CD4-positive, alpha-beta T cell (primary cell): ENCODE measurements at regions of chr20 and their contacts with region 1.

Region 1: DNA sequence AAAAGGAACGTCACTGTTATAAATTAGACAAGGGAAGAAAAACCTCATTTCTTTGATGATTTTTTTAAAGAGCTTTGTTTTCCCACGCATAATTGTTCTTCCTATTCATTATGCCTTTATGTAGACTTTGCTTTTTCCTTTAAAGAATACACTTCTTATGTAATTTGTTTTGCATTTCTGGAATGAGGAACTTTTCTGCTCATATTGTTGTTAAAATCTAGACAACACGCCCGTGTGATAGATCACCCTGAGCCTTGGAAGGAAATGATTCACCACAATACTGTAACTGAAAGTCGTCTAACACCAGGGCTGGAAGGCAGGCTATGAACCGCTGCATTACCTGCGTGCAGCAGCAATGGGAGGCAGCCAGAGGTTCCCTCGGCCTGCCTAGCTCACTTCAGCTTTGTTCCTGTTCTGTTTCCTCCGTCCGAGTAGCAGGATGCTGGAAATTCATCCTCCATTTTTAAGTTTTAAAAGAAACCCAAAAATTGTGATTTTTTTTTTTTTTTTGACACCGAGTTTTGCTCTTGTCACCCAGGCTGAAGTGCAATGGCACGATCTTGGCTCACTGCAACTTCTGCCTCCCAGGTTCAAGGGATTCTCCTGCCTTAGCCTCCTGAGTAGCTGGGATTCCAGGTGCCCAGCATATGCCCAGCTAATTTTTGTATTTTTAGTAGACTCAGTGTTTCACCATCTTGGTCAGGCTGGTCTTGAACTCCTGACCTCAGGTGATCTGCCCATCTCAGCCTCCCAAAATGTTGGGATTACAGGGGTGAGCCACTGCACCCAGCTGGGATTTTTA is 49.6 kb upstream of the ZNF217 start:
- DNase-seq: peak; percentile 54 to 88 (median 68)
- ATAC-seq: peak; percentile 96
- H3K4me3 ChIP-seq: peak overlapping the region; percentile 18
- H3K4me3 Mint-ChIP-seq: peak overlapping the region; percentile 84
- H3K27ac ChIP-seq: peak overlapping the region; percentile 83 to 85
- H3K27ac Mint-ChIP-seq: peak overlapping the region; percentile 93
- H3K4me1 ChIP-seq: peaks cover 38% of the 10 kb centered on the region
- H3K4me1 Mint-ChIP-seq: peaks cover 53% of the 10 kb centered on the region
- H3K27me3 ChIP-seq: no peaks in the 10 kb centered on the region
- H3K27me3 Mint-ChIP-seq: no peaks in the 10 kb centered on the region
- CTCF ChIP-seq: no peak

Region 2: DNA sequence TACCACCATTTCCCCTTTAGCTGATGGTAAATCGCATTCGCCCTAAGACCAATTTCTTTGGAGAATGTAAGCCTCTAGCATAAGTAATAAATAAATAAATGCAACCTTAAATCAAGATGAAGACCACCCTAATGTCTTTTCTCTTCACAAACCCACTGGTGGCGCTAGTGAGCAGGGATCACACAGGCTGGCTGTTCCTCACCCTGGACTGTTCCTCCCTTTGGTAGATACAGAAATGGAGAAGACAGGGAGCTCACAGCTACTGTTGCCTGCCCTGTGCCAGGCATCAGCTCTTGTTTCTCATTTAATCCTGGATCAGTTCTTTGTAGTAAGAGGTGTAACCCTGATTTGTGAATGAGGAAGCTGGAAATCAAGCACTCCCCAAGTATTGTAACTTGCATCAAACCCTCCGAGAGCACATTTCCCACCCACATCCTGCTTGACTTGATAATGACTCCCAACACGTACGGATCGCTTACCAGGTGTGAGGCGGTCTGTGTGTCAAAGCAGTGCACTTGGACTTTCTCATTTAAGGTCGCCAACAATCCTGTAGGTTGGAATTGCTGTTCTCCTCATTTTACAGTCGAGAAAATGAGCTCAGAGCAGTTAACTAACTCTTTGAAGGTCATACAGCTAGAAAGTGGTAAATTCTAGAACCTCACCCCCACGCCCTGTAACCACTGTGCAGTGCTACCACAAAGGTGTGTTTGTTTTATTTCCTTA is 435.0 kb before region 1 on chr20:
- CTCF ChIA-PET with region 1: no interaction called
- POLR2A ChIA-PET with region 1: no interaction called
- intact Hi-C with region 1: no loop called
- DNase-seq: peak in 6 of 14 experiments; percentile 8 to 58 (median 24)
- ATAC-seq: peak; percentile 89
- H3K4me3 ChIP-seq: peak overlapping the region; percentile 23
- H3K4me3 Mint-ChIP-seq: peak overlapping the region; percentile 74
- H3K27ac ChIP-seq: no peak overlapping the region
- H3K27ac Mint-ChIP-seq: peak overlapping the region; percentile 80
- H3K4me1 ChIP-seq: peaks cover 17% of the 10 kb centered on the region
- H3K4me1 Mint-ChIP-seq: peaks cover 20% of the 10 kb centered on the region
- H3K27me3 ChIP-seq: no peaks in the 10 kb centered on the region
- H3K27me3 Mint-ChIP-seq: no peaks in the 10 kb centered on the region
- CTCF ChIP-seq: no peak

Region 3: DNA sequence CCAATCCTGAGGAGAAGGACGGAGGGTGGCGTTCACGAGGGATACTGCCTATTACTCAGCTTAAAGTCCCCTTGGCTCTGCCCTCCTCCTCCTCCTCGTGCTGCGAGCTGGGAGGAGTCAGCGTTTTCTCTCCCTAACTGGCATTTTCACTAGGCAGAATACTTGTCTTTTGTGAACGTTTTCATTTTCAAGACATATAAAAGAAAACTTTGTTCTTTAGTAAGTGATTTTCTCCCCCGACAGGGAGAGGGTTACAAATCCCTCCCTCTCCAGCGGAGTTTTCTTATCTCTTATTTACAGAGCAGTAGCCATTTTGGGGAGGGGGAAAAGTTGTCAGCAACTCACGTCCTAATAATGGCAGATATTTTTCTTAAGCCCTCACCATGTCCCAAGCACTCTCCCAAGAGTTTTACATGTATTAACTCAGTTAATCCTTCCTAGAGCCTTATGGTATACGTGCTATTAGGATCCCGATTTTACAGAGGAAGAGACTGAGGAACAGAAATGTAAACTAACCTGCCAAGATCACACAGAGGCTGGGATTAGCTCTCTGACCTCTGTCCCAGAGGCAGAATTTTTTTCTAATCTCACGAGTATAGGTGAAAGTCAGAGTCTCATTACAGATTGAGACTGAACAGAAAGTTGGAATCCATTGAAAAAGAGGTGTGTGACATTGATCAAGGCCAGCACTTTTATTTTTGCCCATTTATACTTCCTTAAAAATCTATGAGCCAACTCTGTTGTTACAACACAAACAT is 19.6 kb before region 1 on chr20:
- CTCF ChIA-PET with region 1: interaction called, 8 read pairs
- POLR2A ChIA-PET with region 1: interaction called, 41 read pairs
- intact Hi-C with region 1: no loop called
- DNase-seq: peak in 9 of 14 experiments; percentile 20 to 75 (median 41)
- ATAC-seq: peak; percentile 78
- H3K4me3 ChIP-seq: peak overlapping the region; percentile 57
- H3K4me3 Mint-ChIP-seq: peak overlapping the region; percentile 82
- H3K27ac ChIP-seq: peak overlapping the region; percentile 58 to 81
- H3K27ac Mint-ChIP-seq: peak overlapping the region; percentile 92
- H3K4me1 ChIP-seq: peaks cover 34% of the 10 kb centered on the region
- H3K4me1 Mint-ChIP-seq: peaks cover 37% of the 10 kb centered on the region
- H3K27me3 ChIP-seq: no peaks in the 10 kb centered on the region
- H3K27me3 Mint-ChIP-seq: no peaks in the 10 kb centered on the region
- CTCF ChIP-seq: no peak

Region 4: DNA sequence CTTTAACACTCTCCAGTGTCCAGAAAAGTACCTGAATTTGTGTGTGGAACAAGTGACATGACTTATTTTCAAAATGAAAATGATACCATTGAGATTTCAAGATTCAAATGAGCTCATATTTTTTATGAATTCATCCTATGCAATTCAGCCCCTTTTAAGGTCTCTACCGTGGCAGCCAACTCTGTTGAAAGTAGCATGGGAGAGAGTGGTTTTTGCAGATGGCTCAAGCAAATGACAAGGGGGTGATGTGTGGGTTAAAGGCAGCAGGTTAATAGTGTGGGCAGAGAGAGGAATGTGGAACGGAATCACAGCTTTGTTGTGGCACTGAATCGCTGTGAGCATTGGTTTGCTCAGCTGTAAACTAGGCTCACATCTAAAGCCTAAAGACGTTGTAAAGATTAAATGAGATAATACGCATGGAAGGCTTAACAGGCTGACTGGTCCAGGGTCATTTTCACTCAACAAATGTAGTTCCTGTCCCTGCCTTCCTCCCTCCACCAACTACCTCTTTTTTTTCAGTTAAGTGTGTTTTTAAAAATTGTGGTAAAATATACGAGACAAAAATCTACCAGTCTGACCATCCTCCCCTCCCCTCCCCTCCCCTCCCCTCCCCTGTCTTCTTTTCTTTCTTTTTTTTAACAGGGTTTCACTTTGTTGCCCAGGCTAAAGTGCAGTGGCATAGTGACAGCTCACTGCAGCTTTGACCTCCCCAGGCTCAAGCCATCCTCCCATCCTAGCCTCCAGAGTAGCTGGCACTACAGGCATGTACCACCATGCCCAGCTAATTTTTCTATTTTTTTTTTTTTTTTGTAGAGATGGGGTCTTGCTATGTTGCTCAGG is 65.1 kb after region 1 on chr20:
- CTCF ChIA-PET with region 1: no interaction called
- POLR2A ChIA-PET with region 1: interaction called, 7 read pairs
- intact Hi-C with region 1: loop called in 1 of 2 experiments (anchors 5 kb)
- DNase-seq: peak in 6 of 14 experiments; percentile 2 to 51 (median 26)
- ATAC-seq: peak; percentile 38
- H3K4me3 ChIP-seq: no peak overlapping the region
- H3K4me3 Mint-ChIP-seq: peak overlapping the region; percentile 69
- H3K27ac ChIP-seq: peak overlapping the region; percentile 52 to 57
- H3K27ac Mint-ChIP-seq: peak overlapping the region; percentile 92
- H3K4me1 ChIP-seq: peaks cover 45% of the 10 kb centered on the region
- H3K4me1 Mint-ChIP-seq: peaks cover 47% of the 10 kb centered on the region
- H3K27me3 ChIP-seq: no peaks in the 10 kb centered on the region
- H3K27me3 Mint-ChIP-seq: no peaks in the 10 kb centered on the region
- CTCF ChIP-seq: no peak

Region 5: DNA sequence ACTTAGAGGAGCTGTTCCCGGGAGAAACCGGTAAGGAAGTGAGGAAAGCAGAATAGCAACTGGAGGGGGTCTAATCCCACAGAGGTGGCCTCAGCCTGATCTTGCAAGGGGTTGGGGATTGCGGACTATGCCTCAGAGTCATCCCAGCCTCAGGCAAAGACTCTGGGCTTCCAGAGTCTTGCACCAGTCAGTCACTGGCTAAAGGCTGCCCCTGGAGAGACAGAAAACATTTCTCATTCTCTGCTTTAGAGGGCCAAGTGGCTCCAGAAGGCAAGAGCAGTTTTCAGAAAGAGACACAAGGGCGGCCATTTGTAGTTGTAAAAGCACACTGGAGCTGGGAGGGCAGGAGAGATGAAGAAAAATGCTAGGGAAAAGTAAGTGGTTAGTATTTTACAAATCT is 1161.4 kb after region 1 on chr20:
- CTCF ChIA-PET with region 1: no interaction called
- POLR2A ChIA-PET with region 1: no interaction called
- intact Hi-C with region 1: no loop called
- DNase-seq: no peak
- ATAC-seq: no peak
- H3K4me3 ChIP-seq: no peak overlapping the region
- H3K4me3 Mint-ChIP-seq: no peak overlapping the region
- H3K27ac ChIP-seq: no peak overlapping the region
- H3K27ac Mint-ChIP-seq: no peak overlapping the region
- H3K4me1 ChIP-seq: no peaks in the 10 kb centered on the region
- H3K4me1 Mint-ChIP-seq: no peaks in the 10 kb centered on the region
- H3K27me3 ChIP-seq: no peaks in the 10 kb centered on the region
- H3K27me3 Mint-ChIP-seq: peaks cover 4% of the 10 kb centered on the region
- CTCF ChIP-seq: no peak